ENCODE measurements at regions of chr6 and their contacts with region 1.

Region 1: DNA sequence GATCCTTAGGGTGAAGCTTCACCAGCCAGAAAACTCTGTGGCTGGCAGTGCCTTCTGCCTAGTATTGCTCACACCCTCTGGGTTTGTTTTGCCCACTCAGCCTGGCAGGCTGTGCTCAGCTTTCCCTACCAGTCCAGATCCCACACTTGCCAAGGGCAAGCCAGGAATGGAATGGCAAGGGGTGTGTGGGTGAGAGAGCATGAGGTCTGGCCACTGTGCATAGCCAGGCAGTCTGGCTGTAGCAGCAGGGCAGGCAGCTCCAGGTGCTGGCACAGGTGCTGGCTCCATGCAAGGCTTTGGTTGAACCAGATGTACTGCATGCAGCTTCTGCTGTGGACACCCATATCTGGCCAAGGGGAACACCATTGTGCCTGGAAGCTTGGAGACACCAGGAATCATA is 1720.3 kb downstream of the HACE1 start:
- DNase-seq: no peak
- H3K4me3 ChIP-seq: no peak overlapping the region
- H3K27ac ChIP-seq: no peak overlapping the region
- H3K4me1 ChIP-seq: no peaks in the 10 kb centered on the region
- CTCF ChIP-seq: no peak

Region 2: DNA sequence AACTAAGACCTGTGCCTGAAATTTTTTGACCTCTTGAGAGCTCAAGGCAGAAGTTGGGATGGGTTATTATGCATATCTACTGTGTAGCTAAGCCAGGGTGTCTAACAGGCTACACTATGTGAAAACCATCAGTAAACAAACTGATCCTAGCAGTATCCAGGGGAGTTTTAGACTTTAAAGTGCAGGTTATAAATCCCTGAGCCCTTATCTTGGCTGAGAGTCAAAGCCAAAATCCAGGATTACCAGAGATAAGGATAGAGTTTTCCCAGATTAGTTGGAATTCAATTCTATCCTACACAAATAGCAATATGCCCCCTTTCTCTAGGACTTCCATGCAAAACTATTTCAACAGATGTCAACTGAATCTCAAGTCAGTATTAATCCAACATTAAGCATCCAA is 516.2 kb before region 1 on chr6:
- CTCF ChIA-PET with region 1: no interaction called
- POLR2A ChIA-PET with region 1: no interaction called
- intact Hi-C with region 1: loop called (anchors 10 kb)
- DNase-seq: no peak
- H3K4me3 ChIP-seq: no peak overlapping the region
- H3K27ac ChIP-seq: no peak overlapping the region
- H3K4me1 ChIP-seq: no peaks in the 10 kb centered on the region
- CTCF ChIP-seq: no peak

Region 3: GRCh38 chr6:104266922-104267321 is 1127.5 kb after region 1 on chr6:
- CTCF ChIA-PET with region 1: no interaction called
- POLR2A ChIA-PET with region 1: no interaction called
- intact Hi-C with region 1: no loop called
- DNase-seq: no peak
- H3K4me3 ChIP-seq: no peak overlapping the region
- H3K27ac ChIP-seq: no peak overlapping the region
- H3K4me1 ChIP-seq: no peaks in the 10 kb centered on the region
- CTCF ChIP-seq: no peak

Measured in OCI-LY7 (cell line).